HEK293 (cell line): ENCODE measurements at regions of chr11 and their contacts with region 1.

Region 1: DNA sequence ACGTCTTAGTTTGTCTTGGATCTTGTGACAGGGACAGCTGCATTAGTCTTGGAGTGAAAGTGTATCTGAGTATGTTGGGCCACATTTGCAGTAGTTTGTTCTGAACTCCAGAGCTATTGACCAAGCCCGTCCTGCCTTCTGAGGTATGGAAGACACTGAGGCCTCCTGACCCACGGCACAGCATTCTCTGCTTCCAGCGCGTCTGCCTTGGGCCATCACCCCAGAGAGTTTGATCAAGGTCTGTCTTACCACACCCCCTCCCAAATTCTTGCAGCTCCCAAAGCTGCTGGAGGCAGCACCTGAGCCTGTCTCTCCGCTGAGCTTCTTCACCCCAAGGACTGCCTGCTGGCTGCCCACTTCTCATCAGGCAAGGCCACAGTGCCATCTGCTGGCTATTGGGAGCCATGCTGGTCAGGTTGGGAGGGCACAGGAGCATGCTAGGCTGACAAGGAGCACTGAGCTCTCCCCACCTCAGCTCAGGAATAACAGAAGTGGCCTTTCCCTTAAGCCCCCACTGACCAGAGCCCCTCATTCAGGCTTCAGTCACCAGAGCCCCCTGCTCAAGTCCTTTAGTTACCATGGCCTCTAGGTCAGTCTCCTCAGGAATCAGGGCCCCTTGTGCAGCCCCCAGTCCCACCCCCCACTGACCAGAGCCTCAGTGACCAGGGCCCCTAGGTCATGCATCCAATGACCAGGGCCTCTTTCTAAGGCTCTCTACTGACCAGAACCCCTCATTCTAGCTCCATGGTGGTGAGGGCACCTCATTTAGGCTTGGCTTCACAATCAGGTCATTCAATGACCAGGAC is 27.2 kb upstream of the SMPD1 start:
- H3K4me3 ChIP-seq: no peak overlapping the region
- H3K27ac ChIP-seq: no peak overlapping the region
- H3K4me1 ChIP-seq: no peaks in the 10 kb centered on the region
- CTCF ChIP-seq: peak; percentile 64

Region 2: DNA sequence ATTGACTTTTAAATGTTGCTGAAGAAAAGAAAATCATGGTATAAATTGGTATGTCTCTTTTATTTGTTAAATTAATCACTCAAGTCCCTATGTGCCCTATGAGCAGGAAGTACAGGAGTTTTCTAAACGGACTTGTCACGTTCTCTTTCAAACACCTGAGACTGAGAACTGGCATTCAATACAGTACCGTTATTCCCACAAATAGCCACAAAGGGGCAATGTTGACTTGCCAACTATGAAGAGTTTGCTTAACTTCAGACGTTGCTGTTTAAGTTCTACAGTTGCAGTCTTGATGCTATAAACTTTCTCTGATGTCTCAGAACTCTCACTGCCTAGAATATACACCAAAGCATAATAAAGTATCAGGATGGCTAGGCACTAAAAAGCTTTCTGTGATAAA is 340.1 kb before region 1 on chr11:
- CTCF ChIA-PET with region 1: interaction called, 55 read pairs
- POLR2A ChIA-PET with region 1: no interaction called
- H3K4me3 ChIP-seq: no peak overlapping the region
- H3K27ac ChIP-seq: no peak overlapping the region
- H3K4me1 ChIP-seq: no peaks in the 10 kb centered on the region
- CTCF ChIP-seq: no peak

Region 3: GRCh38 chr11:6251120-6251733 is 111.8 kb before region 1 on chr11:
- CTCF ChIA-PET with region 1: interaction called, 52 read pairs
- POLR2A ChIA-PET with region 1: no interaction called
- H3K4me3 ChIP-seq: no peak overlapping the region
- H3K27ac ChIP-seq: no peak overlapping the region
- H3K4me1 ChIP-seq: no peaks in the 10 kb centered on the region
- CTCF ChIP-seq: no peak

Region 4: DNA sequence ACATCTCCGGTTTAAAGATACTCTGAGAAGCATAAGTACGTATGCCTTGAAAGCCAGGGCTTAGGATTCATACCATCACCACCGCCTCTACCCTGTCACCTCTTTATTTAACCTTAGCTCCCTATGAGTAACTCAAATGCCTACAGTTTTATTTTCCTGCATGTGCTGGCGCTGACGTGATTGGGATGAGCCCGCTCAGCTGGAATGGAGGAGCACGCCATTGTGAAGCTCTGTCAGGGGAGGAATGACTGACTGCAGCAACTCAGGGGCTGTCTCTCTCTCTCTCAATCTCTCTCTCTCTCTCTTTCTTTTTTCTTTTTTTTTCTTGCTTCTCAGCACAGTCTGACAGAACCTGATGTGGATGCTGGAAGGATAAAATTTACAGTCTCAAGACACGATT is 55.2 kb before region 1 on chr11:
- CTCF ChIA-PET with region 1: interaction called, 16 read pairs
- POLR2A ChIA-PET with region 1: no interaction called
- H3K4me3 ChIP-seq: no peak overlapping the region
- H3K27ac ChIP-seq: no peak overlapping the region
- H3K4me1 ChIP-seq: no peaks in the 10 kb centered on the region
- CTCF ChIP-seq: no peak

Region 5: DNA sequence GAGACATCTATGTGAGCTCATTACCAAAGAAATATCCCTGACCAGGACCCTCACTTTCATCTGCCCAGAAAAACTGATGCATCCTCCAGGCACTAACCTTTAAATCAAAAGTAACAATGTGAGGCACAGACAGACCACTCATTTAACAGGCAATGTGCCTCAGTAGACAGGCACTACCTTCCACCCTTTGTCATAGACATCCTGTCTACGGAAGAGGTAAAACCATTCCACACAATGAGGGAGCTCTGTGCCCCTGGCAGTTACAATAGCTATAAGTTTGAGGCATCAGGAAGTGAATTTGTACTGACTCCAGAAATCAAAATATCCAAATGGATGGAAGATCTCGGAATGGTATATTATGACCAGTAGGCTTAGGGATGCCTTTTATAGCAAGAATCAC is 36.1 kb before region 1 on chr11:
- CTCF ChIA-PET with region 1: interaction called, 13 read pairs
- POLR2A ChIA-PET with region 1: no interaction called
- H3K4me3 ChIP-seq: no peak overlapping the region
- H3K27ac ChIP-seq: no peak overlapping the region
- H3K4me1 ChIP-seq: no peaks in the 10 kb centered on the region
- CTCF ChIP-seq: no peak

Region 6: GRCh38 chr11:6900327-6900999 is 537.4 kb after region 1 on chr11:
- CTCF ChIA-PET with region 1: no interaction called
- POLR2A ChIA-PET with region 1: no interaction called
- H3K4me3 ChIP-seq: no peak overlapping the region
- H3K27ac ChIP-seq: no peak overlapping the region
- H3K4me1 ChIP-seq: no peaks in the 10 kb centered on the region
- CTCF ChIP-seq: no peak